ENCODE measurements at regions of chr6 and their contacts with region 1.

Region 1: DNA sequence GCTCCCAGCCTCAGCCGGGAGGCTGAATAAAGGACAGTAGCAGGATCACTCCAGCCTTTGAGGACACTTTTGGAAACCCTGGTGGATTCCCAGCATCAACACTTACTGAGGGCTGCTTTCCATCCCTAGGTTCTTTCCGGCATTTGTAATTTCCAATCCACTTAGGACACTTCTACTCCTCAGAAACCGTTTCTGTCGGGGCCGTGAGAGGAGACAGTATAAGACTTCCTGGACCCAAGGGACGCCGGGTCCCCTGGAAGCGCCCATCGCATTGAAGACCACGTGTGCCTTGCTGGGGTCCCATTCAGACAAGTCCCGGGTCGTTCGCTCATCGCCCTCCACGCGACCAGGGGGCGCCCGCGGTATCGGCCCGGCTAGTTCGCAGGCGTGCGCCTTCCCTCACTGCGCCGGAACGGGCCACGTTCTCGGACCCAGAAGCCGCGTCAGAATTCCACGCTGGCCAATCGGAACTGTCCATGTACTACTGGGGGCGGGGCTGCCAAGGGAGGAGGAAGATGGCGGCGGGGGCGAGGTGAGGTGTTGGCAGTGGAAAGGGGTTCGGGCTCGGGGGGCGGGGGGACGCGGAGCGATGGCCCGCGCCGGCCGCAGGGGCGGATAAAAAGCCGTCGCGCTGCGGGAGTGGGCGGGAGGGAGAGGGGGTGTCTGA is at the start of gene NUS1:
- DNase-seq: peak; percentile 92 to 98 (median 96)
- ATAC-seq: peak; percentile 98
- H3K4me3 ChIP-seq: peak within 1 kb of the TSS; percentile 95
- H3K4me3 Mint-ChIP-seq: peak within 1 kb of the TSS; percentile 85 to 98 (median 94)
- H3K27ac ChIP-seq: peak within 1 kb of the TSS; percentile 74
- H3K27ac Mint-ChIP-seq: peak within 1 kb of the TSS; percentile 81 to 98 (median 91)
- H3K4me1 ChIP-seq: peaks cover 24 to 28% of the 10 kb centered on the region in 2 donors
- H3K4me1 Mint-ChIP-seq: peaks cover 37 to 57% (median 53%) of the 10 kb centered on the region in 7 donors
- H3K27me3 ChIP-seq: no peaks in the 10 kb centered on the region
- H3K27me3 Mint-ChIP-seq: peaks cover 0 to 2% (median 0%) of the 10 kb centered on the region in 5 donors
- total RNA-seq, gene NUS1: 19.6 to 37.6 (median 33.2) TPM

Region 2: GRCh38 chr6:116279260-116280063 is 1395.7 kb before region 1 on chr6 and contains the start of gene TSPYL1:
- CTCF ChIA-PET with region 1: no interaction called
- POLR2A ChIA-PET with region 1: no interaction called
- intact Hi-C with region 1: loop called in 1 of 2 experiments (anchors 10 kb)
- DNase-seq: peak; percentile 85 to 98 (median 96)
- ATAC-seq: peak; percentile 92
- H3K4me3 ChIP-seq: peak within 1 kb of the TSS; percentile 86
- H3K4me3 Mint-ChIP-seq: peak within 1 kb of the TSS; percentile 96 to 100 (median 98)
- H3K27ac ChIP-seq: peak within 1 kb of the TSS; percentile 99
- H3K27ac Mint-ChIP-seq: peak within 1 kb of the TSS; percentile 98 to 100 (median 100)
- H3K4me1 ChIP-seq: peaks cover 39 to 43% of the 10 kb centered on the region in 2 donors
- H3K4me1 Mint-ChIP-seq: peaks cover 37 to 73% (median 54%) of the 10 kb centered on the region in 7 donors
- H3K27me3 ChIP-seq: no peaks in the 10 kb centered on the region
- H3K27me3 Mint-ChIP-seq: peaks cover 0 to 6% (median 0%) of the 10 kb centered on the region in 5 donors
- total RNA-seq, gene TSPYL1: 42.8 to 226 (median 104) TPM

Region 3: DNA sequence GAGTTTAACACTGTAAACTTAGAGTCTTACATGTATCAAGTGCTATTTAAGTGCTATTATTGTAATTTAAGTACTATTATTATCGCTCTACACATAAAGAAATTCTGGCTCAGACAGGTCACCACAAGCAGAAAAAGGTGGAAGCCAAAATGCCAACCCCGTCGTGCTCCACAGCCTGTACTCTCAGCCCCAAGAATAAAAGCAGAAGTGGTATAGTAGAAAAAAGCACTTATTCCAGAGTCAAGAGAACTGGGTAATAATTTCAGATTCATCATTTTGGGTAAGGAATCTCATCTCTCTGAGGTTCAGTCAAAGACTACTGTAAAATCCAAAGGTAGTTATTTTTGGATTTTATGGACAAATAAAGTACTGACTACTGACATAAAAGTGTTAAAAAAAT is 1007.5 kb before region 1 on chr6:
- CTCF ChIA-PET with region 1: no interaction called
- POLR2A ChIA-PET with region 1: no interaction called
- intact Hi-C with region 1: loop called (anchors 5 to 10 kb)
- DNase-seq: no peak
- ATAC-seq: no peak
- H3K4me3 ChIP-seq: peak overlapping the region; percentile 92
- H3K4me3 Mint-ChIP-seq: peak overlapping the region; percentile 90 to 100 (median 98)
- H3K27ac ChIP-seq: peak overlapping the region; percentile 91
- H3K27ac Mint-ChIP-seq: peak overlapping the region; percentile 44 to 100 (median 98)
- H3K4me1 ChIP-seq: peaks cover 17 to 24% of the 10 kb centered on the region in 2 donors
- H3K4me1 Mint-ChIP-seq: peaks cover 29 to 55% (median 45%) of the 10 kb centered on the region in 7 donors
- H3K27me3 ChIP-seq: no peaks in the 10 kb centered on the region
- H3K27me3 Mint-ChIP-seq: peaks cover 0 to 15% (median 0%) of the 10 kb centered on the region in 5 donors

Region 4: GRCh38 chr6:117449549-117450439 is 225.3 kb before region 1 on chr6:
- CTCF ChIA-PET with region 1: no interaction called
- POLR2A ChIA-PET with region 1: no interaction called
- intact Hi-C with region 1: loop called in 1 of 2 experiments (anchors 5 kb)
- DNase-seq: peak; percentile 25 to 72 (median 60)
- ATAC-seq: peak; percentile 72
- H3K4me3 ChIP-seq: no peak overlapping the region
- H3K4me3 Mint-ChIP-seq: no peak overlapping the region
- H3K27ac ChIP-seq: no peak overlapping the region
- H3K27ac Mint-ChIP-seq: no peak overlapping the region
- H3K4me1 ChIP-seq: no peaks in the 10 kb centered on the region
- H3K4me1 Mint-ChIP-seq: peaks cover 0 to 5% (median 0%) of the 10 kb centered on the region in 7 donors
- H3K27me3 ChIP-seq: peaks cover 0 to 3% of the 10 kb centered on the region in 2 donors
- H3K27me3 Mint-ChIP-seq: peaks cover 19 to 73% (median 42%) of the 10 kb centered on the region in 5 donors

Region 5: DNA sequence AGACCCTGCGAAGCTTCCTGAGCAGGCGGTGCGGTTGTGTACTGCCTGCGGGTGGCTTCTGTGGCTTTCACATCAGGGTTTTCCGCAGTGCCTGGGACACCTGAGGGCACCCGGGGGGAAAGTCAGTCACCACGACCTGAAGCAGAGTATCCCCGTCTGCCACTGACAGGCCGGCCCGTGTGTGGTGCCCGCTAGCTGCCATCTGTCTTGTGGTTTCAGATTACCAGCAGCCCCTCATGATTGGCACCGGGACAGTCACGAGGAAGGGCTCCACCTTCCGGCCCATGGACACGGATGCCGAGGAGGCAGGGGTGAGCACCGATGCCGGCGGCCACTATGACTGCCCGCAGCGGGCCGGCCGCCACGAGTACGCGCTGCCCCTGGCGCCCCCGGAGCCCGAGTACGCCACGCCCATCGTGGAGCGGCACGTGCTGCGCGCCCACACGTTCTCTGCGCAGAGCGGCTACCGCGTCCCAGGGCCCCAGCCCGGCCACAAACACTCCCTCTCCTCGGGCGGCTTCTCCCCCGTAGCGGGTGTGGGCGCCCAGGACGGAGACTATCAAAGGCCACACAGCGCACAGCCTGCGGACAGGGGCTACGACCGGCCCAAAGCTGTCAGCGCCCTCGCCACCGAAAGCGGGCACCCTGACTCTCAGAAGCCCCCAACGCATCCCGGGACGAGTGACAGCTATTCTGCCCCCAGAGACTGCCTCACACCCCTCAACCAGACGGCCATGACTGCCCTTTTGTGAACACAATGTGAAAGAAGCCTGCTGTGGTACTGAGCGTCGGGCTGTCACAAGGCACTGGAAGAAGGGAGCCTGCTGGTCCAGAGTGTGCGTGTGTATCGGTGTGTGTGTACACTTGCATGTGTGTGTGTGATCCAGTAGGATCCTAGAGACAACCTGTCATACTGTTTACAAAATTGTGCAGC is 127.2 kb before region 1 on chr6:
- CTCF ChIA-PET with region 1: no interaction called
- POLR2A ChIA-PET with region 1: interaction called, 3 read pairs
- intact Hi-C with region 1: loop called (anchors 1 kb)
- DNase-seq: peak; percentile 20 to 57 (median 37)
- ATAC-seq: peak; percentile 60
- H3K4me3 ChIP-seq: peak overlapping the region; percentile 75
- H3K4me3 Mint-ChIP-seq: peak overlapping the region; percentile 81 to 90 (median 86)
- H3K27ac ChIP-seq: peak overlapping the region; percentile 45
- H3K27ac Mint-ChIP-seq: peak overlapping the region; percentile 79 to 95 (median 87)
- H3K4me1 ChIP-seq: peaks cover 18 to 37% of the 10 kb centered on the region in 2 donors
- H3K4me1 Mint-ChIP-seq: peaks cover 28 to 44% (median 41%) of the 10 kb centered on the region in 7 donors
- H3K27me3 ChIP-seq: no peaks in the 10 kb centered on the region
- H3K27me3 Mint-ChIP-seq: peaks cover 0 to 9% (median 0%) of the 10 kb centered on the region in 5 donors

Region 6: DNA sequence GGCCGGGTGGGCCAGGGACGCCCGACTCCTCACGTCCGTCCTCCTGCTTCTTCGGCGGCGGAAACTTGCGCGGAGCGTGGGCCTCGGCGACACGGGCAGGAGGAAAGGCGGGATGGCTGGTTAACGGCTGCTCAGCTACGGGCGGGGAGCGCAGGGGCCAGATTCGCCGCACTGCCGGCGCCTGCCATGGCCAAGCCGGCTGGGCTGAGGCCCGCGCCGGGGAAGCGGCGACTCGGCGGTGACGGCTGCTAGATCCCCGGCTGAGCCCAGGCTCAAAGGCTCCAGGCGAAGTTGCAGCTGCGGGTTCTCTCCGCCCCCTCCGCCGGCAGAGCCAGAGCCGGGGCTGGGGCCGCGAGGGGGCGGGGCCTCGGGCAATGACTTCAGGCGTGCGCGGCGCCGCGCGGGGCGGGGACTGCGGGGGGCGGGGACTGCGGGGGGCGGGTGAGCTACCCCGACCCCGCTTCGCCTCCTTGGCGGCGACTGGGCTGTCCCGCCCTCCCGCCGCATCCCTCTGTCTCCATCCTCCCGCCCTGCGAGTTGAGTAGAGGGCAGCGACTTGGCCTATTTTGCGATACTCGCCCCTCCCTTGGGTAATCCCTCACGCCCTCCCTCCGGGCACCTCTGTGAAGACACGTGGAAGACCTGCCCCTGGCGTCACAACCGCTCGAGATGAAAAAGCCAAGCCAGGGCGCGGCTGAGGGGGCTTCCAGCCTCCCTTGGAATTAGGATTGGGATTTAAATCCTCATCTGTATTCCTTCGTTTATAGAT is 976.3 kb after region 1 on chr6 and contains the start of gene CEP85L:
- CTCF ChIA-PET with region 1: no interaction called
- POLR2A ChIA-PET with region 1: no interaction called
- intact Hi-C with region 1: loop called in 1 of 2 experiments (anchors 1 kb)
- DNase-seq: peak; percentile 84 to 91 (median 89)
- ATAC-seq: peak; percentile 96
- H3K4me3 ChIP-seq: peak within 1 kb of the TSS; percentile 66
- H3K4me3 Mint-ChIP-seq: peak within 1 kb of the TSS; percentile 91 to 97 (median 94)
- H3K27ac ChIP-seq: peak within 1 kb of the TSS; percentile 87
- H3K27ac Mint-ChIP-seq: peak within 1 kb of the TSS; percentile 88 to 99 (median 94)
- H3K4me1 ChIP-seq: peaks cover 32 to 40% of the 10 kb centered on the region in 2 donors
- H3K4me1 Mint-ChIP-seq: peaks cover 33 to 73% (median 59%) of the 10 kb centered on the region in 7 donors
- H3K27me3 ChIP-seq: no peaks in the 10 kb centered on the region
- H3K27me3 Mint-ChIP-seq: no peaks in the 10 kb centered on the region
- total RNA-seq, gene CEP85L: 51.1 to 89.1 (median 78.6) TPM